Kidney (tissue), 22 donors: ENCODE measurements at regions of chr1 and their contacts with region 1.

Region 1: GRCh38 chr1:152182431-152182830 is 23.4 kb upstream of the RPTN start:
- DNase-seq: no peak
- H3K4me3 ChIP-seq: no peak overlapping the region
- H3K27ac ChIP-seq: no peak overlapping the region
- H3K4me1 ChIP-seq: no peaks in the 10 kb centered on the region
- H3K27me3 ChIP-seq: no peaks in the 10 kb centered on the region
- CTCF ChIP-seq: peak; percentile 21

Region 2: DNA sequence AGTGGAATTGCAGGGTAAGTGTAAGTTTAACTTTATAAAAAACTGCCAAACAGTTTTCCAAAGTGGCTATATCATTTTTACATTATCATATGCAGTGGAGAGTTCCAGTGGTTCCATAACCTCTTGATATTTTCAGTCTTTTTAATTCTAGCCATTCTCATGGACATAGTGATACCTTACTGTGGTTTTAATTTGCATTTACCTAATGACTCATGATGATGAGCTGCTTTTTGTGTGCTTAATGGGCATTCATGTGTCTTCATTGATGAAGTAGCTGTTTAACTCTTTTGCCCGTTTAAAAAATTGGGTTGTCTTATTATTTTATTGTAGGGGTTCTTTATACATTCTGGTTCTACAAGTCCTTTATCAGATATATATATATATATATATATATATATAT is 541.2 kb before region 1 on chr1:
- intact Hi-C with region 1: no loop called
- DNase-seq: no peak
- H3K4me3 ChIP-seq: no peak overlapping the region
- H3K27ac ChIP-seq: no peak overlapping the region
- H3K4me1 ChIP-seq: peaks cover 0 to 22% (median 7%) of the 10 kb centered on the region in 3 donors
- H3K27me3 ChIP-seq: no peaks in the 10 kb centered on the region
- CTCF ChIP-seq: no peak

Region 3: GRCh38 chr1:152052606-152053005 is 129.8 kb before region 1 on chr1:
- intact Hi-C with region 1: loop called (anchors 5 kb)
- DNase-seq: peak; percentile 89 to 93 (median 91)
- H3K4me3 ChIP-seq: no peak overlapping the region
- H3K27ac ChIP-seq: no peak overlapping the region
- H3K4me1 ChIP-seq: peaks cover 0 to 10% (median 4%) of the 10 kb centered on the region in 3 donors
- H3K27me3 ChIP-seq: peaks cover 4% of the 10 kb centered on the region
- CTCF ChIP-seq: peak; percentile 96